Psoas muscle (tissue), 8 donors: ENCODE measurements at regions of chr11 and their contacts with region 1.

Region 1: DNA sequence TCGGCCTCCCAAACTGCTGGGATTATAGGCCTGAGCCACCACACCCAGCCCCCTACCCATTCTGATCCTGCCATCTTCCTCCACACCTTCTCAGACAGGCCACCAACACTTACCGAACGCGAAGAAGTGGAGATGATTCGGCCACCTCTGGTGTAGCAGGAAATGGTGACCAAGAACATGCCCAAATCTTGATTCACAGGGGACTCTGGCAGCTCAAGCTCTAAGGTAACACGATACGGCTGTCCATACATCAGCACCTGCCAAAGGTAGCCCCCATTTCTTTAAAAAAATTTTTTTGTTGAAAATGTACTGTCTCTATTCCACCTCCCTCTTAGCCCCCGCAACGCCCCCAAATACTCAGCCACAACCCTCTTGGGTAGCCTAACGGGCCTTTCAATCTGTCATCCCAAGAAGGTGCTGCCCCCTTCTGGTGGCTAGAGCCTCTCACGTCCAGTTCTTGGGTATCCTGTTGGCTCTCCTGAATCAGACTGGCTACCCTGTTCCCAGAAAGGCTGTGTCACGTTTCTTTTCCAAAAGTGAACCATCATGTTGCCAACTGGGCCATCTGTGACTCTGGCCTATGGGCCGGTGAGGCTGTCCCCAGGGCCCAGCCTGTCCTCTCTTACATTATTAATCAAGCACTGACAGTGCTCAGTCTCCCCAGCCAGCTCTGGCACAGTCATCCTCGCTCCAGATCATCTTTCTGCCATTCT is 5.3 kb upstream of the LRRN4CL start:
- DNase-seq: peak; percentile 86 to 93
- ATAC-seq: peak; percentile 95 to 97 (median 96)
- H3K4me3 ChIP-seq: no peak overlapping the region
- H3K27ac ChIP-seq: peak overlapping the region; percentile 79
- H3K4me1 ChIP-seq: peaks cover 10% of the 10 kb centered on the region
- H3K27me3 ChIP-seq: no peaks in the 10 kb centered on the region
- CTCF ChIP-seq: peak; percentile 87

Region 2: DNA sequence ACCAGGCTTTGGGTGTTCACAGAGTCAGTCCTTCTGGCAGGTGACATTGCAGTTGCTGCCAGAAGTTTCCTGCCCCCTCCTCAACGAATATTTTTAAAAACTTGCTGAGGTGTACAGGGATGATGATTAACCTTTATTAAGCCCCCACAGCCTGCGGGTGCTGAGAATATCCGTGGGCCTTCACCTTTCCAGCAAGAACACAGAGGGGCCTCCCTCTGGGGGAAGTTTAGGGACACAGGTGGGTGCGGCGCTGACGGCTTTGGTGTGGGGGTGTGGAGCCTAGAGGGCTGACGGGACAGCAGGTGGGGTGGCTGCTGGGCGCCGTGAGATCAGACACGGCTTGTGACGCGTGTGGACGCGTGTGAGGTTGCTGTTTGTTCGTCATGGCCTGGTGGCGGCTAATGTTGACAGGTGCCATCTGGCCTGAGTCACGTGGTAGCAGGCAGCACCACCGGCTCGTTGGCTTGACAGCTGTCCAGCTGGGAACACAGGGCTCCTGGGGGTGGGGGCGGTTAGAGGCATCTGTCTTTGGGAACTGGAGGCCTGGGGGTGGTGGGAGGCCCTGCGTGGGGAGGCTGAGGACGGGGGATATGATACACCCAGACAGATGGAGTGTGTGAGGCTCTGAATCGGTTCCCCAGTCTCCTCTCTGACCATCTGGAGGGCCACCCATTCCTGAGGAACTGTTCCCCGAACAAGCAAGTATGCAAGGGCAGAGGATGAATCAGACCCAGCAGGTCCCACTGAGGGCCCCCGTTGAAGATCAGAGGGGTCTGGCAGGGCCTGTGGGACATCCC is 1198.6 kb before region 1 on chr11:
- intact Hi-C with region 1: no loop called
- DNase-seq: peak in 1 of 2 donors; percentile 38
- ATAC-seq: peak; percentile 77 to 82 (median 80)
- H3K4me3 ChIP-seq: no peak overlapping the region
- H3K27ac ChIP-seq: no peak overlapping the region
- H3K4me1 ChIP-seq: peaks cover 10% of the 10 kb centered on the region
- H3K27me3 ChIP-seq: peaks cover 0 to 3% (median 0%) of the 10 kb centered on the region in 3 donors
- CTCF ChIP-seq: no peak

Region 3: GRCh38 chr11:62394825-62395538 is 299.6 kb before region 1 on chr11:
- intact Hi-C with region 1: loop called (anchors 5 to 10 kb)
- DNase-seq: peak; percentile 76 to 84
- ATAC-seq: peak; percentile 85 to 94 (median 86)
- H3K4me3 ChIP-seq: peak overlapping the region; percentile 50
- H3K27ac ChIP-seq: peak overlapping the region; percentile 7
- H3K4me1 ChIP-seq: peaks cover 22% of the 10 kb centered on the region
- H3K27me3 ChIP-seq: no peaks in the 10 kb centered on the region
- CTCF ChIP-seq: peak; percentile 70

Region 4: GRCh38 chr11:62487738-62488551 is 206.7 kb before region 1 on chr11:
- intact Hi-C with region 1: no loop called
- DNase-seq: no peak
- ATAC-seq: no peak
- H3K4me3 ChIP-seq: no peak overlapping the region
- H3K27ac ChIP-seq: no peak overlapping the region
- H3K4me1 ChIP-seq: no peaks in the 10 kb centered on the region
- H3K27me3 ChIP-seq: no peaks in the 10 kb centered on the region
- CTCF ChIP-seq: no peak

Region 5: GRCh38 chr11:62508268-62509058 is 186.1 kb before region 1 on chr11:
- intact Hi-C with region 1: no loop called
- DNase-seq: peak; percentile 75 to 88
- ATAC-seq: peak; percentile 90 to 95 (median 92)
- H3K4me3 ChIP-seq: peak overlapping the region; percentile 52
- H3K27ac ChIP-seq: peak overlapping the region; percentile 83
- H3K4me1 ChIP-seq: peaks cover 5% of the 10 kb centered on the region
- H3K27me3 ChIP-seq: no peaks in the 10 kb centered on the region
- CTCF ChIP-seq: peak; percentile 59

Region 6: DNA sequence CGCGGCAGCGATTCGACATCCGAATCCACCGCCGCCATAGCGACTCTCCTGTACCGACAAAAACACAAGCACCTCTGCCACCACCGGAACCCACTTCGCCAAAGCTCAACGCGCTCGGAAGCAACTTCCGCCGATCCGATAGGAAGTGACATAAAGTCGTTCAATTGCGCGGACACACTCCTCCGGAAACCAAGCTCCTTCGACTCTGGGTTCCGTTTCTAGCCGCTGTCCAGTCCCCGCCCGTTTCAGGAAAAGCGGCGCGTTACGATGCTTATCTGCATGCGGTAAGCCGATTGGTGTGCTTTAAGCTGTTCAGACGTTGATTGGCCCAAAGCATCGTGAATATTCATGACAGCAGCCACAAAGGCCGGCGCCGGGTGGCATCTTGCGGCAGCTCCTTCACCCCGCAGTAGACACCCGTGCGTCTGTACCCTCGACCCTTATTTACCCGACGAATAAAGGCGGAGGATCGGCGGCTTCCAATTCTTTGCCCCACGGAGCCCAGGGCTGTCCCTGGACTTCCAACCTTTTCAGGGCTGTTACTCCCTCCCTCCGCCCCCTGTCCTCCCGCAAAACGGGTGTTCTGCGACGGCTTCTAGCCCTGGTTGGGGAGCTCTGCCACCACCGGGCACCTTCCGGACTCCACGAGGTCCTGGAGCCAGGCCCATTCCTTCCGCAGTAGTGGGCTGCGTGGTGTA is 103.0 kb before region 1 on chr11 and contains the start of gene TUT1:
- intact Hi-C with region 1: loop called in 1 of 2 experiments (anchors 5 kb)
- DNase-seq: peak; percentile 94 to 97
- ATAC-seq: peak; percentile 93 to 95 (median 94)
- H3K4me3 ChIP-seq: peak within 1 kb of the TSS; percentile 95
- H3K27ac ChIP-seq: peak within 1 kb of the TSS; percentile 94
- H3K4me1 ChIP-seq: peaks cover 27% of the 10 kb centered on the region
- H3K27me3 ChIP-seq: no peaks in the 10 kb centered on the region
- CTCF ChIP-seq: no peak
- total RNA-seq, gene TUT1: 14.3 to 23.7 (median 19.6) TPM

Region 7: DNA sequence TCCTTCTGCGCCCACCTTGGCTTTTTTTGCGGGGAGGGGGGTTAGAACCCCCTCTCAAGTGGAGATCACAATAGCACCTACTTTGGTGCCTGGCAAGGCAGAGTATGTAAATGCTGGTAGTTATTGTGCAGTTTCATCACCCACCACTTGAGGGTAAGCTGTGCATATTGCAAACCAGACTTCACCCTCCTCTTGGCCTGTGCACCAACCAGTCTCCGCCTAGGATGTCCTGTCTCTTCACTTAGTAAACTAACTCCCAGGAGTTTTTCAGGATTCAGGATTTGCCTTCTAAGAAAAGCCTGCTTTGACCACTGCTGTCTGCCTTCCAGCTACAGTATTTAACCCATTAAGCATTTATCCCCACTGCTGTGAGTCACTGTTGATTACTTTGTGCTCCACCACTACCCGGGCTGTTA is 13.8 kb before region 1 on chr11:
- intact Hi-C with region 1: loop called in 1 of 2 experiments (anchors 2 kb)
- DNase-seq: peak; percentile 51 to 71
- ATAC-seq: peak; percentile 63 to 74 (median 70)
- H3K4me3 ChIP-seq: no peak overlapping the region
- H3K27ac ChIP-seq: peak overlapping the region; percentile 91
- H3K4me1 ChIP-seq: peaks cover 32% of the 10 kb centered on the region
- H3K27me3 ChIP-seq: no peaks in the 10 kb centered on the region
- CTCF ChIP-seq: peak; percentile 54